GM12878 (cell line): ENCODE measurements at regions of chr2 and their contacts with region 1.

Region 1: DNA sequence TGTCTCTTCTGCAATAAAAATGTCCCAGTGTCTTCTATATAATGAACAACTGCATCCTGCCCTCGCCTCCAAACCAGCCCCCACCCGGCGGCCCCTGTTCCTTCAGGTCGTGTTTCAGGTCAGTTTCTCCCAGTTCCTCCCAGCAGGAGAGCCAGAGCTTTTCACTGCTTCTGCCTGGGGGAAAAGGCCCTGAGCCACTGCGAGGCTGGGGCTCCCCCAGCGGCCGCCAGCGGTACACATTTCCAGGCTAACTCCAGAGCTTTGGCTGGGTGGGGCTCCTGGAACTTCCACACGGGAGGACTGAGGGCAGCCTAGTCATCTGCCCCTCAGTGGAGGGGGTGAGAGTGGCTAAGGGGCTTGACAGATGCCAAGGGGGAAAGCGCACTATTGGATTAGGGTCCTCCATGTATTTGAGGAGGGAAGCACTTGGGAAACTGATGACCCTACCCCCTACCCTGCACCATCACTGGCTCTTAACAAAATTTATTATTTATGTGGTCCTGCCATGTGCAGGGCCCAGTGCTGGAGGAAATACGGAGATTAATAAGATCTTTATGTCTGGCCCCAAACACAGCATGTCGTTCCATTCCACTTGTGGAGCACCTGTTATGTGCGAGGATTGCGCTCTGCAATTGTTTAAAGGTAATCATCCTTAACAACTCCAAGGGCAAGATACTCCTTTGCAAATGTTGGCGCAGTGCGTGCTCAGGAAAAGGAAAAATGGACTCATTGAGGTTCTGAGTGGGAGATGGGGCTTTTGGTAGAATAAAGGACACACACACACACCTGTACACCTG is 17.3 kb upstream of the CYS1 start:
- DNase-seq: no peak
- ATAC-seq: peak; percentile 96
- H3K4me3 ChIP-seq: no peak overlapping the region
- H3K27ac ChIP-seq: no peak overlapping the region
- H3K4me1 ChIP-seq: peaks cover 2% of the 10 kb centered on the region; the same call in 1 of the 2 replicates
- H3K27me3 ChIP-seq: no peaks in the 10 kb centered on the region
- CTCF ChIP-seq: peak; percentile 91 to 99 (median 92)
- EP300 ChIP-seq: no peak
- POLR2A ChIP-seq: no peak
- RAD21 ChIP-seq: peak; percentile 80

Region 2: GRCh38 chr2:9897331-9897737 is 200.2 kb before region 1 on chr2:
- CTCF ChIA-PET with region 1: no interaction called
- POLR2A ChIA-PET with region 1: no interaction called
- RAD21 ChIA-PET with region 1: no interaction called
- SMC1A ChIA-PET with region 1: no interaction called
- in situ Hi-C with region 1: no loop called
- intact Hi-C with region 1: no loop called
- DNase-seq: peak; percentile 19
- ATAC-seq: peak; percentile 90
- H3K4me3 ChIP-seq: no peak overlapping the region
- H3K27ac ChIP-seq: 0 out of 2 replicates have a peak overlapping the region, but pooled peaks have one; percentile 2
- H3K4me1 ChIP-seq: peaks cover 3% of the 10 kb centered on the region; the same call in 1 of the 2 replicates
- H3K27me3 ChIP-seq: no peaks in the 10 kb centered on the region
- CTCF ChIP-seq: no peak
- EP300 ChIP-seq: no peak
- POLR2A ChIP-seq: no peak
- RAD21 ChIP-seq: no peak

Region 3: DNA sequence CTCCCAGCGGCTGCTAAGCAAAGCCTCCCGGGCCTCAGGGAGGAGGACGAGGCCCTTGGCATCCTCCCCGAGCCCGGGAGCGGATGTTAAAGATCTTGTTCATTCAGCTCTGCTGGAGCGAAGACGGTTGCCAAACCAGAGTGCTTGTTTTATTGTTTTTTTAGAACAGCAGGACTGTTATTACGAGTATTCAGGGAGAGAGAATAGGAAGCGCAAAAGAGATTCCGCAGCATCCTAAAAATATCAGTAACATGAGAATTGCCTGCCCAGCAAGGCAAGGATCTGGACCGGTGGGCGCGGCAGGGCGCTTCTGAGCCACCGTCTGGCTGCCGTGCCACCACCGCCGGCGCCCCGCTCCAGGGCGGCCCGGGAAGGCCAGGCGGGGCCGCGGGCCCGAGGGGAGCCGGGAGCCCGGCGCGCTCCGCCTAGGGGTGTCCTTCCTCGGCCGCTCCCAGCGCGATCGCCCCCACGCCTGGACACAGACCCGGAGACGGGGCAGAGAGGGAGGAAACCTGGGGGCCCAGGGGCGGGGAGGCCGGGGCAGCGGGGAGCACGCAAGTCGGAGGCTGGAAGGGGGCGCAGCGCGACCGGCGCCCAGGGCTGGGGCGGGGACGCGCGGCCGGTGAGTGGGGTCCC is 18.2 kb before region 1 on chr2:
- CTCF ChIA-PET with region 1: interaction called, 983 read pairs
- POLR2A ChIA-PET with region 1: interaction called, 73 read pairs
- RAD21 ChIA-PET with region 1: interaction called, 216 read pairs
- SMC1A ChIA-PET with region 1: interaction called, 236 read pairs
- in situ Hi-C with region 1: no loop called
- intact Hi-C with region 1: no loop called
- DNase-seq: no peak
- ATAC-seq: peak; percentile 28
- H3K4me3 ChIP-seq: peak overlapping the region; percentile 57
- H3K27ac ChIP-seq: peak overlapping the region; percentile 40; the same call in 1 of the 2 replicates
- H3K4me1 ChIP-seq: peaks cover 50% of the 10 kb centered on the region
- H3K27me3 ChIP-seq: no peaks in the 10 kb centered on the region
- CTCF ChIP-seq: no peak
- EP300 ChIP-seq: no peak
- POLR2A ChIP-seq: no peak
- RAD21 ChIP-seq: no peak